ENCODE measurements at regions of chr22 and their contacts with region 1.

Region 1: DNA sequence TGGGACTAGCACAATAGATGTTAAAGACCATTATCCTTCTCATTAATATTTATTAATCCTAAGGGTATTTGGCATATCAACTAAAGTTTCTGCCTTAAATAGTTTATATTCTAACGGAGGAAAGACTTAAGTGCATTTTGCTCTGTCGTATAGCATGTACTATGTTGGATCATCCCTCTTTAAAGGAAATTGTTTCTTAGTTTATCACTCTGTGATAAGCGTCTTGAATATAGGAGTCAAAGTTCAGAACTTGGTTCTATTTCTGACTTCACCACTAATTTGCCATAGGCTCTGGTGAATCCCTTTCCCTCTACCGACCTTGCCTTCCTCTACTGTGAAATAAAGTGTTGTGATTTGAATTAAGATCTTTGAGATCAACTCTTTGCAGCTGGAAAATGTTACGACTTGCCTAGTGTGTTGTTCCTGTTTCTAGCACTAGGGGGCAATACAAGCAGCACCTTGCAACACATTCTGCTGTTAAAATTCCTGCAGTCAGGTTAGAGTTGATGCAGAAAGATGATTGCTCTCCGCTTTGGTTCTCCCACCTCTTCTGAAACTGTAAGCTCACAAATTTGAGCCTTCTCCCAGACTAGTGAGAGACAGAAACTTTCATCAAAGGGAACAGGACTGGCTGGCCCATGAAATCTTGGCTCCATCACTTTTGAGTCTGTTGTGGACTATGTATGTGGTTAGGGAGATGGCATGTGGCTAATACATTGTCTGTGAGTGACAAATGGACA is 27.8 kb upstream of the ZNRF3 start:
- DNase-seq: peak in 1 of 2 donors; percentile 73
- H3K4me3 ChIP-seq: no peak overlapping the region
- H3K27ac ChIP-seq: no peak overlapping the region
- H3K4me1 ChIP-seq: no peaks in the 10 kb centered on the region
- H3K27me3 ChIP-seq: no peaks in the 10 kb centered on the region
- CTCF ChIP-seq: peak; percentile 89 to 94 (median 92)

Region 2: DNA sequence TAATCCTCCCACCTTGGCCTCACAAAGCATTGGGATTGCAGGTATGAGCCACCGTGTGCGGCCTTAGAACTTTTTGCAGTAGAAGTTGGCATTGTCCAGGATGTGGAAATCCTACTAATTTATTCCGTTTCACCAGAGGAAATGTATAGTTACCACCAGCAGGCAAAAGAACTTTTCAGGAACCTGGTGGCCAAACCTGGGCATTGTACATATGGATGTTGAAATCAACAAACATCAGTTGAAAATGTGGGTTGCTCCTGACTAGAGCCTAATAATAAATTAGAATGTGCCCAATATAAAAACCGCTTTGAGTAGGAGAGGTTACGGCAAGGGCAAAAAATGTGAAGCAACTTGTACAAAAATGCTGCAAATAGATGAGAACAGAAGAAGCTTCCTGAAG is 14.4 kb before region 1 on chr22:
- intact Hi-C with region 1: no loop called
- DNase-seq: no peak
- H3K4me3 ChIP-seq: no peak overlapping the region
- H3K27ac ChIP-seq: no peak overlapping the region
- H3K4me1 ChIP-seq: no peaks in the 10 kb centered on the region
- H3K27me3 ChIP-seq: no peaks in the 10 kb centered on the region
- CTCF ChIP-seq: no peak

Region 3: DNA sequence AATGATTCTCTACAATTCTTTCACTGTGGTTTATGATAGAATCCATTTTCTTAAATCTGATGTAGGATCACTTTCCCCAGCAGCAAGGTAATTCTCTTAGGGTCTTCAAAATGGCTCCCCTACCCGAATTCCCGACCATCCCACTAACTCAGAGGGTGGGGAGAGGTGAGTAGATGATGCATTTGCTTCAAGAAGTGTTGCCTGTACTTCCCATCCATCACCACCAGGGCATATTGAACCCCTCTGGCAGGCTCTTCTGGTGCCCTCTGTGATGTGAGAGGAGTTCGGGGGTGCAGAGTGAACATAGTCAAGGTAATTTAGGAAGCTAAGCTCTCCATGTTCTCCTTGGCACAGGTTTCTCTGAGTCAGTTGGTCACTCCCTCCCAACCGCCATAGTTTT is 80.2 kb after region 1 on chr22:
- intact Hi-C with region 1: loop called (anchors 5 kb)
- DNase-seq: peak in 1 of 2 donors; percentile 1
- H3K4me3 ChIP-seq: no peak overlapping the region
- H3K27ac ChIP-seq: peak overlapping the region; percentile 66 to 70
- H3K4me1 ChIP-seq: peaks cover 0 to 19% of the 10 kb centered on the region in 2 donors
- H3K27me3 ChIP-seq: no peaks in the 10 kb centered on the region
- CTCF ChIP-seq: no peak

Region 4: DNA sequence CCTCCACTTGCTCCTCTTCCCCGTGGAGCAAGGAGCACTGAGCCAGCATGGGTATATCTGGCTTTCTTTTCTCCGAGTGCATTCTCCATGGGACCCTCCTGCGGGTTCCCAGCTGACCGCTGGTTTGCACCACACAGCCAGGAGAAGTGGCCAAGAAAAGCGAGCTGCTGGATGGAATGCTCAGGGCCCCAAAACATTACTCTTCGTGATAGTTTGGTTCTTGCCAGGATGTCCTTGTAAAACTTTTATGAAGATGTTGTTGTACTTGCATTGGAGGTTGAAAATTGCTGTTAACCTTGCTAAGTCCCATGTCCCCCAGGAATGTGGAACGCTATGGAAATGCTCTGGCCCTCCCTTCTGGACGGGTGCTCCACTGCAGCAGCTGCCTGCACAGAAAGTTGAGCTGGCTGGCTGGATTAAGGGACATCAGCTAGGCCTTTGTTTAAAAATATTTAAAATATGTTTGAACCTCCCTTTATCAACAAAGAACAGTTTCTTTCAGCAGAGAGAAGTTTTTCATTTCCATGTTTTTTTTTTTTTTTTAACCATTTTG is 96.5 kb after region 1 on chr22:
- intact Hi-C with region 1: loop called (anchors 5 kb)
- DNase-seq: no peak
- H3K4me3 ChIP-seq: peak overlapping the region in 1 of 2 donors; percentile 9
- H3K27ac ChIP-seq: peak overlapping the region in 1 of 2 donors; percentile 62
- H3K4me1 ChIP-seq: peaks cover 8 to 40% of the 10 kb centered on the region in 2 donors
- H3K27me3 ChIP-seq: no peaks in the 10 kb centered on the region
- CTCF ChIP-seq: peak; percentile 17 to 49 (median 26)

Region 5: GRCh38 chr22:29040385-29041275 is 185.1 kb after region 1 on chr22:
- intact Hi-C with region 1: loop called (anchors 1 kb)
- DNase-seq: peak in 1 of 2 donors; percentile 85
- H3K4me3 ChIP-seq: no peak overlapping the region
- H3K27ac ChIP-seq: peak overlapping the region in 1 of 2 donors; percentile 35
- H3K4me1 ChIP-seq: peaks cover 0 to 19% of the 10 kb centered on the region in 2 donors
- H3K27me3 ChIP-seq: no peaks in the 10 kb centered on the region
- CTCF ChIP-seq: peak; percentile 94 to 97 (median 96)

Region 6: GRCh38 chr22:29154364-29155048 is 299.0 kb after region 1 on chr22:
- intact Hi-C with region 1: loop called (anchors 2 kb)
- DNase-seq: peak in 1 of 2 donors; percentile 82
- H3K4me3 ChIP-seq: peak overlapping the region; percentile 7 to 47
- H3K27ac ChIP-seq: no peak overlapping the region
- H3K4me1 ChIP-seq: peaks cover 3 to 15% of the 10 kb centered on the region in 2 donors
- H3K27me3 ChIP-seq: no peaks in the 10 kb centered on the region
- CTCF ChIP-seq: peak; percentile 84 to 99 (median 96)